GM10248 (cell line): ENCODE measurements at regions of chr17 and their contacts with region 1.

Region 1: GRCh38 chr17:19728079-19728495 is 11.7 kb upstream of the SLC47A2 start:
- DNase-seq: no peak
- CTCF ChIP-seq: no peak

Region 2: GRCh38 chr17:19744922-19745757 is 17.1 kb after region 1 on chr17:
- CTCF ChIA-PET with region 1: interaction called, 38 read pairs
- POLR2A ChIA-PET with region 1: no interaction called
- DNase-seq: peak; percentile 89
- CTCF ChIP-seq: peak; percentile 98